Gastrocnemius medialis (tissue), 4 donors: ENCODE measurements at regions of chr3 and their contacts with region 1.

Region 1: GRCh38 chr3:3200632-3201212 is 21.2 kb upstream of the CRBN start:
- DNase-seq: peak; percentile 3 to 24
- ATAC-seq: peak in 1 of 2 donors; percentile 41
- H3K4me3 ChIP-seq: no peak overlapping the region
- H3K27ac ChIP-seq: no peak overlapping the region
- H3K4me1 ChIP-seq: no peaks in the 10 kb centered on the region
- H3K27me3 ChIP-seq: no peaks in the 10 kb centered on the region
- CTCF ChIP-seq: peak; percentile 40 to 71 (median 52)
- POLR2A ChIP-seq: no peak

Region 2: DNA sequence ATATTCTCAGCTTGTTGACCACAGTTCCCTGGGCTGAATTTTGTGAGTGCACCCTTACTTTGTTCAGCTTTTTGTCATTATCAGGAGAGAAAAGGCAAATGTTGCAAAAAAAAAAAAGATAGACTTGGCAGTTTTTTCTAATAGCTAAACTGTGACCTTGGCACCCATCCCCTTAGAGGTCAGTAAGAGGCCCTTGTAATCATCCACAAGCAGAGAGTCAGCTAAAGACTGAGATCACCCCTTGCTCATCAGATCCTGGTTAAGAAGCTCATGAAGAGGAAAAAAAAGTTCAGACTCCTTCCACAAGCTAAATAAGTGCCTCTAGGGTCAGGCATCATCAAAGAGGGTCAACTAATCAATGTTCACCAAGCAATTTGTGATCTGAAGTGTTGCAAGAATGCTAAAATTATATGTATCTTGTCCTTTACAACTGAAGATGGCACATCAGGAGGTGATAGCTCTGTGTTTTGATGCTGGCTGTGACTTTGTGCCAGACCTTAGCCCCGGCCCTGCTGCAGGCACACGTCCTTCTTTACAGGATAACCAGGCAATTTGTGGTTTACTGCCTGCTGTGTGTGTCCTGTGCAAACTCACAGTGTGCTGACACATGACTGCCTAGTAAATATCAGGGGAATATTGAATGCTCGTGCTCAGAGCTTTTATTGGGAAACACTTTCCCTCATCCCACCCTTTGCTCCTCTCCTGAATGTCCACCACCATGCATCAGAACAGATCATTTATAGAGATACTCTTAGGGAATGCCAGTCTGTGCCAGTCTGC is 353.5 kb before region 1 on chr3:
- in situ Hi-C with region 1: no loop called
- intact Hi-C with region 1: no loop called
- DNase-seq: peak in 1 of 2 donors; percentile 2
- ATAC-seq: peak in 1 of 2 donors; percentile 73
- H3K4me3 ChIP-seq: no peak overlapping the region
- H3K27ac ChIP-seq: no peak overlapping the region
- H3K4me1 ChIP-seq: no peaks in the 10 kb centered on the region
- H3K27me3 ChIP-seq: no peaks in the 10 kb centered on the region
- CTCF ChIP-seq: no peak
- POLR2A ChIP-seq: no peak

Region 3: DNA sequence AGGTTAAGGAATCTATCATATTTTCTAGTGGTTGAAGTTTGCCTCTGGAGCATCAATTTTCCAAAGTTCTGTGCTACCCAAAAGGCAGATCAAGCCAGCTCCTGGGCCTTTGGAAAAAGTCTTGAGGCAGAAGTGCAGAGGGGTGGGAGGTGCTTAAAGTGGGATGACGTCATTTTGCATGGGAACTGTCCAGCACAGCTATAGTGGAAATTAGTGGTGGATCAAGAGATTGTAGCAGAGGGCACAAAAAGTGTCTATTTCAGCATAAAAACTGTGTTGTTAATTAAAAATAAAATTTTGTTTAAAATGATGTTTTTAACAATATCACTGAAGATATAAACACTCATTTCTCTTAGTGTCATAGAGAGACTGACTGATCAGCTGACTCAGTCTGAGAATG is 820.4 kb after region 1 on chr3:
- in situ Hi-C with region 1: loop called in 1 of 4 experiments (anchors 25 kb)
- intact Hi-C with region 1: no loop called
- DNase-seq: no peak
- ATAC-seq: no peak
- H3K4me3 ChIP-seq: no peak overlapping the region
- H3K27ac ChIP-seq: no peak overlapping the region
- H3K4me1 ChIP-seq: no peaks in the 10 kb centered on the region
- H3K27me3 ChIP-seq: no peaks in the 10 kb centered on the region
- CTCF ChIP-seq: no peak
- POLR2A ChIP-seq: no peak

Region 4: GRCh38 chr3:4271834-4272233 is 1071.1 kb after region 1 on chr3:
- in situ Hi-C with region 1: loop called in 1 of 4 experiments (anchors 10 kb)
- intact Hi-C with region 1: no loop called
- DNase-seq: no peak
- ATAC-seq: no peak
- H3K4me3 ChIP-seq: no peak overlapping the region
- H3K27ac ChIP-seq: no peak overlapping the region
- H3K4me1 ChIP-seq: no peaks in the 10 kb centered on the region
- H3K27me3 ChIP-seq: no peaks in the 10 kb centered on the region
- CTCF ChIP-seq: peak in 4 of 5 experiments; percentile 10 to 32 (median 20)
- POLR2A ChIP-seq: no peak

Region 5: GRCh38 chr3:4284865-4285264 is 1084.1 kb after region 1 on chr3:
- in situ Hi-C with region 1: loop called in 2 of 4 experiments (anchors 10 kb)
- intact Hi-C with region 1: loop called (anchors 2 kb)
- DNase-seq: no peak
- ATAC-seq: no peak
- H3K4me3 ChIP-seq: no peak overlapping the region
- H3K27ac ChIP-seq: no peak overlapping the region
- H3K4me1 ChIP-seq: no peaks in the 10 kb centered on the region
- H3K27me3 ChIP-seq: no peaks in the 10 kb centered on the region
- CTCF ChIP-seq: no peak
- POLR2A ChIP-seq: no peak

Region 6: DNA sequence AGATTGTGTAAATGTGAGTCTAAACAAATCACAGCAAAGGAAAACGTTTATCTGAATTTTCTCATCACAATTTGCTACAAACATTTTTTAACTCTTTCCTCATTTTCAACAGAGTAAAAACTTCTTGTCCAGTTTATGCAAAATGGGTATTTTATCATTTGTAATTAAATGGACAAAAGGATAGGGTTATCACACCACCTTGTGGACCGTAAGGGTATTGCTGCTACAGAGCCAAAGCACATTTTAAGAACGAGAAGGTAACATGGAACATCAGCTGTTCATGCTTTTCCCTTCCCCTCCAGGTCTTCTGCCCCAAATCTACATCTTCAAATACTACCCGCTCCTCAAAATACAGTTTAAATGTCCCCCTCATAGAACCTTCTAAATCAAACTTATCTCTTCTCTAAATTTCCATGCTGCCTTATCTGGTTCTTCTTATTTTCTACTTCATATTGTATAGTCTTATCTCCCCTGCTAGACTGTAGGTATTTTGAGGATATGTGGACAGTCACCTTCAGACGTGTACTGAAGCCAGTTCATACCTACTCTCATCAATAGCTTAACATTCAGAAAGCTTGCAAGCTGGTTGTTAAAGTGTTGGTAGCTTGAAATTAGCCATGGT is 1089.7 kb after region 1 on chr3:
- in situ Hi-C with region 1: loop called in 2 of 4 experiments (anchors 10 kb)
- intact Hi-C with region 1: loop called (anchors 2 kb)
- DNase-seq: no peak
- ATAC-seq: peak in 1 of 2 donors; percentile 68
- H3K4me3 ChIP-seq: no peak overlapping the region
- H3K27ac ChIP-seq: no peak overlapping the region
- H3K4me1 ChIP-seq: no peaks in the 10 kb centered on the region
- H3K27me3 ChIP-seq: no peaks in the 10 kb centered on the region
- CTCF ChIP-seq: peak; percentile 64 to 88 (median 75)
- POLR2A ChIP-seq: no peak